Activated T-helper 1 cell treated with anti-CD3 and anti-CD28 coated beads, Interleukin-12 subunit alpha, Interleukin-12 subunit beta, Interleukin-2, Interleukin-4 antibody, amounts not matched to agents 30 ng/mL and 10 ng/mL and 1 ng/mL, durations not matched to agents 14 hours and 24 hours and 36 hours (primary cell): ENCODE measurements at regions of chr6 and their contacts with region 1.

Region 1: GRCh38 chr6:2999618-3000557 is at the start of gene NQO2:
- DNase-seq: peak; percentile 83
- H3K4me3 Mint-ChIP-seq: peak within 1 kb of the TSS; percentile 90
- H3K27ac Mint-ChIP-seq: peak within 1 kb of the TSS; percentile 90
- H3K4me1 Mint-ChIP-seq: peaks cover 38% of the 10 kb centered on the region
- H3K27me3 Mint-ChIP-seq: peaks cover 3% of the 10 kb centered on the region
- total RNA-seq, gene NQO2: 30.2 and 34.8 TPM in 2 replicates

Region 2: GRCh38 chr6:1499777-1500176 is 1500.1 kb before region 1 on chr6:
- intact Hi-C with region 1: no loop called
- DNase-seq: no peak
- H3K4me3 Mint-ChIP-seq: no peak overlapping the region
- H3K27ac Mint-ChIP-seq: no peak overlapping the region
- H3K4me1 Mint-ChIP-seq: no peaks in the 10 kb centered on the region
- H3K27me3 Mint-ChIP-seq: peaks cover 10% of the 10 kb centered on the region

Region 3: DNA sequence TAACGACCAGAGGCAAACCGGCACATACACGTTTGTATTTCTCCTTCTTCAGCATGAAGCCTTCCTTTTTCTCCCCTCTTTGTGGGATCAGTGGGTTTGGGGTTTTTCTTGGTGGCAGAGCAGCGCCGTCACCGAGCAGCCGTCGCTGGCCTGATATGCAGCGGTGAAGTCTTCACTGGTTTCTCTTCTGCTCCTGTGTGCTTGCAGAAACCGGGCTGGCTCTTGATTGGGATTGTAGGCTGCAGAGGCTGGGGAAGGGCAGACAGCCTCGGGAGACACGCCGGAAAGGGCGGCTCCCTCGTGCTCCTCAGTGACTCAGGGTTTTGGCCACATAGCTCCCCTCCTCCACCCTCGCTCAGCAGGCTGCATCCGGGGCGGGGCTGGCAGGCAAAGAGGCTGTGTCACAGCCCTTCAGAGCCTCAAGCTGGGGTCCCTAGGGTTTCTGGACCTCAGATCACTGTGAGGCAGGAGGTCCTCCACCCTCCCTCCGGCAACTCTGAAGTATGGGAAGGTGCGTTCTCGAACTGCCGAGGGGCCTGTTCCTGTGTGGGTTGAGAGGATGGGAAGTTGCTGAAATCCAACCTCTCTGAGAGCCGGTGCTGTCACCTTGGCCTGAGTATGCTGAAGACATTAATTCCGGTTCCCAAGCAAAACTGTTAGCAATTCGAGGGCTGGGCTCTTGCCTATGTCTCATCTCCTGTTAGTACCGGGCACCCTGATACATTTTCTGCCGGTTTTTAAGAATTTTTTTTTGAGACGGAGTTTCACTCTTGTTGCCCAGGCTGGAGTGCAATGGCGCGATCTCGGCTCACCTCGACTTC is 24.0 kb after region 1 on chr6:
- intact Hi-C with region 1: loop called (anchors 1 kb)
- DNase-seq: peak; percentile 87
- H3K4me3 Mint-ChIP-seq: peak overlapping the region; percentile 87
- H3K27ac Mint-ChIP-seq: peak overlapping the region; percentile 91
- H3K4me1 Mint-ChIP-seq: peaks cover 51% of the 10 kb centered on the region
- H3K27me3 Mint-ChIP-seq: no peaks in the 10 kb centered on the region

Region 4: DNA sequence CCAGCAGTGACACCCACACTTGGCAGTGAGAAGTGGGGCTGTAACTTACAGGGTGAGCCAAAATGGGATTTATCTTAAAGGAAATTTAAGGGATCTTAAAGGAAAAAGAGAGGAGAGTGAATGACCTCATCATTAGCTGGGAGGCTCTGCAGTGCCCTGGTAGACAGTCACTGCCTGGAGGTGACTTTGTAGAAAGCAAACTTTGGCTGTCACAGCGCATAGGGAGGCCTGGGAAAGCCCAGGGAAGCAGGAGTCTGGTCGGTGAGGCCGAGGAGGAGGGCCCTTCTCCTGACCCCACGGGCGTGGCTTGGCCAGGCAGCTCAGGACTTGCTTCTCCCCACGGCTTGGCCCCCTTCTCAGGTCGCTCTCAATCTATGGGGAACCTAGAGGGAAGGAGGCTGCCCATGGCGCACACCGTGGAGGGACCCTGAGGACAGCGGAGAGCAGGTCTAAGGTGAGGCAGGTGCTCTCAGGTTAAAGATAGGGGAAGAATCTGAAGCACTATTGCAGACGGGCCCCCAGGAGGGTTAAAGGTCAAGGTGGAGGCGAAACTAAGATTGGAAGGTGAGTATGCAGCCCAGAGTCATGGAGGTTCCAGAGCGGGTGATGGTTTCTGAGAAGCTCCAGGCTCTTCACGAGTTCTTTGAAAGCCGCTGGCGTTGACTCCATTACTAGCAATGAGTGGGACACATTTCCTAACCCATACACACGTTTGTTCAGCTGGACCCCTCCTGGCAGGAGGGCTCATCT is 52.8 kb after region 1 on chr6:
- intact Hi-C with region 1: loop called (anchors 1 kb)
- DNase-seq: no peak
- H3K4me3 Mint-ChIP-seq: peak overlapping the region; percentile 60
- H3K27ac Mint-ChIP-seq: peak overlapping the region; percentile 56
- H3K4me1 Mint-ChIP-seq: peaks cover 30% of the 10 kb centered on the region
- H3K27me3 Mint-ChIP-seq: peaks cover 25% of the 10 kb centered on the region

Region 5: GRCh38 chr6:3732345-3733141 is 732.7 kb after region 1 on chr6:
- intact Hi-C with region 1: loop called (anchors 5 kb)
- DNase-seq: peak; percentile 38
- H3K4me3 Mint-ChIP-seq: no peak overlapping the region
- H3K27ac Mint-ChIP-seq: no peak overlapping the region
- H3K4me1 Mint-ChIP-seq: peaks cover 5% of the 10 kb centered on the region
- H3K27me3 Mint-ChIP-seq: peaks cover 14% of the 10 kb centered on the region